Dendritic cell treated with granulocyte-macrophage colony-stimulating factor and Interleukin-4, amounts not matched to agents 40 ng/mL and 50 ng/mL, for 4 days (primary cell): ENCODE measurements at regions of chr2 and their contacts with region 1.

Region 1: DNA sequence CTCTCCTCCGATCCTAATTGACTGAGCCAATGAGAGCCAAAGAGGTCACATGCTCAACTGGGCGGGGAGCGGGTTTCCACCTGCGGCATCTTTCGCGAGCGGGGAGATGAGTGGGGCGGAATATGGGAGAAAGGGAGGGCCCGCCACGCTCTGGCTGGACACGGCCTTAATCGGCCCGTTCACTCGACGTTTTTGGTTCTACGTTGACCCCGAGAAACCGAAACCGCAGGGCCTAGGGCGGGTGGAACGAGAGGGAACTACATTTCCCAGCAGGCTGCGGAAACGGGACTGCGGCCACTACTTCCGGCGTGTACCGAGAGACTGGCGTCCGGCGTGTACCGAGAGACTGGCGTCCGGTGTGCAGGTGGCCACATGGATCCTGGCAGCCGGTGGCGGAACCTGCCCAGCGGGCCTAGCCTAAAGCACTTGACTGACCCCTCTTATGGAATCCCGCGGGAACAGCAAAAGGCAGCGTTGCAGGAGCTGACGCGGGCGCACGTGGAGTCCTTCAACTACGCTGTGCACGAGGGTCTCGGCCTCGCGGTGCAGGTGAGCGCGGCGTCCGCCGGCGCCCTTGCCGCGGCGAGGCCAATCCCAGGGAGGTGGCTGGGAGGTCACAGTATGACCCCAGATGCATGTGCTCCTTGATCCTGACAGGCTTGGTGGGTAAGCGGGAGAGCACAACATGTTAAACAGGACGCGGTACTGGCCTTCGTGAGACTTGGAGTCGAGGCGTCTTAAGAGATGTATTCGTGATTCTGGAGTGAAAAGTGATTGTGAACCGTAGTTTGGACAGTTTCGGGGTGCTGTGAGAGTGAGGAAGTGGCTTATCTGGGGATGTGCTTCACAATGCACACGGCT is at the start of gene POLR1B:
- H3K4me3 Mint-ChIP-seq: no peak within 1 kb of the TSS
- H3K27ac Mint-ChIP-seq: no peak within 1 kb of the TSS
- H3K4me1 Mint-ChIP-seq: peaks cover 11% of the 10 kb centered on the region
- H3K27me3 Mint-ChIP-seq: no peaks in the 10 kb centered on the region

Region 2: GRCh38 chr2:112481050-112481527 is 61.3 kb before region 1 on chr2:
- intact Hi-C with region 1: loop called (anchors 2 kb)
- H3K4me3 Mint-ChIP-seq: peak overlapping the region; percentile 92
- H3K27ac Mint-ChIP-seq: peak overlapping the region; percentile 92
- H3K4me1 Mint-ChIP-seq: peaks cover 39% of the 10 kb centered on the region
- H3K27me3 Mint-ChIP-seq: peaks cover 6% of the 10 kb centered on the region

Region 3: GRCh38 chr2:112728378-112729175 is 186.2 kb after region 1 on chr2:
- intact Hi-C with region 1: no loop called
- H3K4me3 Mint-ChIP-seq: no peak overlapping the region
- H3K27ac Mint-ChIP-seq: peak overlapping the region; percentile 37
- H3K4me1 Mint-ChIP-seq: peaks cover 52% of the 10 kb centered on the region
- H3K27me3 Mint-ChIP-seq: no peaks in the 10 kb centered on the region